AG04450 (cell line): ENCODE measurements at regions of chr4 and their contacts with region 1.

Region 1: GRCh38 chr4:151362404-151363164 is 37.2 kb upstream of the SH3D19 start:
- DNase-seq: peak; percentile 59
- H3K4me3 ChIP-seq: no peak overlapping the region
- H3K27ac ChIP-seq: no peak overlapping the region
- H3K27me3 ChIP-seq: peaks cover 3% of the 10 kb centered on the region
- CTCF ChIP-seq: peak; percentile 99

Region 2: GRCh38 chr4:151524610-151525009 is 162.0 kb after region 1 on chr4:
- CTCF ChIA-PET with region 1: no interaction called
- POLR2A ChIA-PET with region 1: no interaction called
- DNase-seq: no peak
- H3K4me3 ChIP-seq: no peak overlapping the region
- H3K27ac ChIP-seq: no peak overlapping the region
- H3K27me3 ChIP-seq: no peaks in the 10 kb centered on the region
- CTCF ChIP-seq: no peak

Region 3: GRCh38 chr4:151604238-151604637 is 241.7 kb after region 1 on chr4:
- CTCF ChIA-PET with region 1: interaction called, 13 read pairs
- POLR2A ChIA-PET with region 1: no interaction called
- DNase-seq: no peak
- H3K4me3 ChIP-seq: no peak overlapping the region
- H3K27ac ChIP-seq: no peak overlapping the region
- H3K27me3 ChIP-seq: peaks cover 11% of the 10 kb centered on the region
- CTCF ChIP-seq: peak; percentile 63